ENCODE measurements at regions of chr6 and their contacts with region 1.

Region 1: GRCh38 chr6:111220383-111221031 is 133.2 kb downstream of the SLC16A10 start:
- DNase-seq: no peak
- H3K4me3 ChIP-seq: no peak overlapping the region
- H3K27ac ChIP-seq: no peak overlapping the region
- H3K27me3 ChIP-seq: no peaks in the 10 kb centered on the region
- CTCF ChIP-seq: no peak

Region 2: DNA sequence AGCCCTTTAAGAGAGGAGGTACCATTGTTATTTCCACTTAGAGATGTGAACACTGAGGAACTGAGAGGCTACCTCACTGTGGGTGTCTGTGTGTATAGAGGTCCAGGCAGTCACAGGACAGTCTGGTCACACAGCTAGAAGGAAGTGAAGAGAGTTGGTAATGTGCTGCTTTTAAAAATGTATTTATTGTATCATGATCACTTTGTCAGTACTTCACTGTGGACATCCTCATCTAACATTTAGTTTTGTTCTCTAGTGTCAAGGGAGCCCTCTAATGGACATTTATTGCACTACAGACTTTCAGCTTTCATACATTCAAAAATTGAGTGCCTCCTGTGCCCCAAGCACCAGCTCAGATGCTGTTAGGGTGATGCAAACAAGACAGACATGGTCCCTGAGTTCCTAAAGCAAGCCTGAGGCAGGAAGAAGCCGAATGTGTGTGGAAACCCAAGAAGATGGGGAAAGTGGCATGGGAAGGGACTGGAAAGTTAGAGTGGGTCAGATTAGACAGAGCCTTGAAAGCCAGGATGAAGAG is 10.2 kb before region 1 on chr6:
- CTCF ChIA-PET with region 1: interaction called, 14 read pairs
- POLR2A ChIA-PET with region 1: no interaction called
- DNase-seq: peak; percentile 16
- H3K4me3 ChIP-seq: no peak overlapping the region
- H3K27ac ChIP-seq: no peak overlapping the region
- H3K27me3 ChIP-seq: no peaks in the 10 kb centered on the region
- CTCF ChIP-seq: peak; percentile 78

Region 3: DNA sequence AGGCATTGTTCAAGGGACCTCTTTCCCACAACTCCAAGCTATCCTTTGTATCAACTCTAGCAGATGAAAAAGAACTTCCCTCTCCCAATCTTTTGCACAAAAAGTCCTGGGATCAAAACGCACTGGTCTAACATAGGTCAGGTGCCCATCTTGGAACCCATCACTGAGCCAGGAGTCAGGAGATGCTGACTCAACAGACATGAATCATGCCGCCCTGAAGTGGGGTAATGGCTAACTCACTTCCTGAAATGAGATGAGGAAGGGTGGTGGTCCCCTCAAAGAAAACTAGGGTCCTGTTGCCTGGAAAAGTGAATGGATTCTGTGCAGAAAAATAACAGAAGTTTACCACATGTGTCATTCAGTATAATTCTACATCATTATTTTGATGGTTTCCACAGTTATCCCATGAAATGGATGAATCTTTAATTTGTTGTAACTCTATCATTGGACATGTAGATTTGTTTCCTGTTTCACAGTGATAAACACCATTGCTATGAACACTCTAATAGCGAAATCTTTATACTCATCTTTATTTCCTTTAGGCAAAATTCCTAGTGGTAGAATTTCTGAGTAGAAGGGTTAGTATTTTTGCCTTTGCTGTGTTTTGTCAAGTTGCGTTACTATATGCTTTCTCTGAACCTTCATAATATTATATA is 18.1 kb after region 1 on chr6:
- CTCF ChIA-PET with region 1: no interaction called
- POLR2A ChIA-PET with region 1: no interaction called
- DNase-seq: no peak
- H3K4me3 ChIP-seq: no peak overlapping the region
- H3K27ac ChIP-seq: no peak overlapping the region
- H3K27me3 ChIP-seq: no peaks in the 10 kb centered on the region
- CTCF ChIP-seq: no peak